Activated T-helper 1 cell treated with anti-CD3 and anti-CD28 coated beads, Interleukin-12 subunit alpha, Interleukin-12 subunit beta, Interleukin-2, Interleukin-4 antibody, amounts not matched to agents 30 ng/mL and 10 ng/mL and 1 ng/mL, durations not matched to agents 14 hours and 24 hours and 36 hours (primary cell): ENCODE measurements at regions of chr3 and their contacts with region 1.

Region 1: DNA sequence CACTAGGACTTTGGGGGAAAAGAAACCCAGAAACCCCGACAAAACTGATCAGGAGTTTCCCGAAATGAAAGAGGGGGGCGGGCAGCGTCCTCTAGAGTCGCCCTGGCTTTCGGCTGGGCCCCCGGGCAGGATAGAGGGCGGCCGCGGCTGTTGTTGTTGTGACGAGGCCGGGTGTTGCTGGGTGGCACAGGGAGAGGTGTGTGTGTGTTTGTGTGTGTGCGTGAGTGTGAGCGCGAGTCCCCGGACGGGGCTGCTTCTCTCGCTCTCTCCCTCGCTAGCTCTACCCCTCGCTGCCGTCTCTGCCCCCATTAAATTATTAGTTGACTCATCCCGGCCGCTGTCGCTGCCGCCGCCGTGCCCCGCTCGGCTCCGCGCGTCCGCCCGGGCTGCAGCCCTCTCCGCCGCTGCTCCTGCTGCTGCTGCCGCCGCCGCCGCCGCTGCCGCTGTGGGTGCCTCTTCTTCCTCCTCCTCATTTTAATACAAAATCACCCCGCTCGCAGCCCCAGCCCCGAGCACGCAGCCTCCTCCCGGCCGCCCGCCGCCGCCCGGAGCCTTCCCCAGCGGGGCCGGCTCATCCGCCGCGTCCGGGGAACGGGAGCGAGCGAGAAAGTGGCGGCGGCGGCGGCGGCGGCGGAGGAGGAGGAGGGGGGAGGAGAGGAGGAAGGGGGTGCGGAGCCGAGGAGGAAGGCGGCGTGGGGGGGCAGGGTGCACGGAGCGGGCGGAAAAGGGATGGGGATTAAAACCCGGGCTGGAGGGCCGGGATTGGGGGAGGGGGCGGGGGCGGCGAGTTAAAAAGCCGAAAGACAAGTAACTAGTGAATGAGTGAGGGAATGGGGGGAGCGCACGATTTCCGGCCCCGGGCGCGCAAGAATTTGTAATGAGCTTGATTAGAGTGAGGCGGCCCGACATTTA is at the start of gene SATB1:
- DNase-seq: peak; percentile 54
- H3K4me3 Mint-ChIP-seq: peak within 1 kb of the TSS; percentile 91
- H3K27ac Mint-ChIP-seq: peak within 1 kb of the TSS; percentile 94
- H3K4me1 Mint-ChIP-seq: peaks cover 72% of the 10 kb centered on the region
- H3K27me3 Mint-ChIP-seq: peaks cover 6% of the 10 kb centered on the region
- total RNA-seq, gene SATB1: 679 and 686 TPM in 2 replicates

Region 2: DNA sequence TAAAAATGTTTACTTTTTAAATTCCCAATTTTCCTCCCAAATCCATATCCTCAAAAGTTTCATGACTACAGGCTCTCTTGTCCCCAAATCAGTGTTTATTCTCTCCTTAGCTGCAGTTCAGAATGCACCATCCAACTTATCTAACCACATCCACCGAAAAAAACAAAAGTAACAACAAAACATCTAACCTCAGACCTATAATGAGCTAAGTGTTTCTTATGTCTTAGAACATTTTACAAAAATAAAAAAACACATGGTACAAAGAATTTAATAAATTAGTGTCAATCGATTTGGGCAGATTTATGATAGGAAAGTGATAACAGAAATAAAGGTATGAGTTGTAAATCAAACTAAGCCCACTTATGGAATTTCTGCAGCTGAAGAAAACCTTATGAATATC is 13.4 kb before region 1 on chr3:
- intact Hi-C with region 1: loop called (anchors 1 kb)
- DNase-seq: no peak
- H3K4me3 Mint-ChIP-seq: peak overlapping the region; percentile 63
- H3K27ac Mint-ChIP-seq: peak overlapping the region; percentile 87
- H3K4me1 Mint-ChIP-seq: peaks cover 89% of the 10 kb centered on the region
- H3K27me3 Mint-ChIP-seq: no peaks in the 10 kb centered on the region

Region 3: GRCh38 chr3:18438586-18438985 is 13.6 kb after region 1 on chr3:
- intact Hi-C with region 1: loop called (anchors 1 kb)
- DNase-seq: peak; percentile 67
- H3K4me3 Mint-ChIP-seq: peak overlapping the region; percentile 91
- H3K27ac Mint-ChIP-seq: peak overlapping the region; percentile 93
- H3K4me1 Mint-ChIP-seq: peaks cover 43% of the 10 kb centered on the region
- H3K27me3 Mint-ChIP-seq: peaks cover 1% of the 10 kb centered on the region